ENCODE measurements at regions of chr5 and their contacts with region 1.

Region 1: DNA sequence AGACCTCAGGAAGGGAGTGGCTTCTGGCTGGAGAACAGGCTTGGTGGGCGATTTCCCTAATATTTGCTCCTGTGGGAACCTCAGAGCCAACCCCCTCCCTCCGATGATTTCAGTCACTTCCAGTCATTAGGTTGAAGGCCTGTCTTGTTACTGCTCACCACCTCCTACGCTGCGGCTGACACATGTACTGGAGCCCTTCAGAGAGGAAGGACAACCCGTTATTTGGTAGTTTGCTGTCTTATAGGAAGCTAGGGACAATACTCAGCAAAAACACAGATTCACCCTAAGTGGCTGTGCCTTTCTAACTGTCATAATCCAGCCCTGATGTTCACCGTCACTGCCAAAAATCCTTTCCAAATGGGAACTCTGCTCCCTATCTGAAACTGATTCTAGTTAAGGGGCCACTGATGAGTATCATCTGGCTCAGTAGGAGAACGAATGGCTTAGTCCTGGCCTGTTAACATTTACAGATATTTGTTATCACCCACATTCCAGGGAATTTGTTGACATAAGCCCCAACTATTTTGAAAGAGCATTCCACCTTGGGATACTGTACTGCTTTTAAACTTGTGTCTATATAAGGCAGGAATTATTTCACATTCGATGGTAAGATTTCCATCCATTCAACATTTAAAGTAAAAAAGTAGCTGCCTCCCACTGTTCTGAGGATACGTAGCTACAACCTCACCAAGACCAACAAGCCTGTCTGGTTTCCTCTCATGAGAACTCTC is 29.3 kb upstream of the ANKH start:
- DNase-seq: peak; percentile 87

Region 2: GRCh38 chr5:14920121-14920520 is 19.2 kb after region 1 on chr5:
- intact Hi-C with region 1: loop called in 1 of 2 experiments (anchors 2 kb)
- DNase-seq: no peak